Activated CD4-positive, alpha-beta memory T cell treated with anti-CD3 and anti-CD28 coated beads for 36 hours (primary cell): ENCODE measurements at regions of chr7 and their contacts with region 1.

Region 1: DNA sequence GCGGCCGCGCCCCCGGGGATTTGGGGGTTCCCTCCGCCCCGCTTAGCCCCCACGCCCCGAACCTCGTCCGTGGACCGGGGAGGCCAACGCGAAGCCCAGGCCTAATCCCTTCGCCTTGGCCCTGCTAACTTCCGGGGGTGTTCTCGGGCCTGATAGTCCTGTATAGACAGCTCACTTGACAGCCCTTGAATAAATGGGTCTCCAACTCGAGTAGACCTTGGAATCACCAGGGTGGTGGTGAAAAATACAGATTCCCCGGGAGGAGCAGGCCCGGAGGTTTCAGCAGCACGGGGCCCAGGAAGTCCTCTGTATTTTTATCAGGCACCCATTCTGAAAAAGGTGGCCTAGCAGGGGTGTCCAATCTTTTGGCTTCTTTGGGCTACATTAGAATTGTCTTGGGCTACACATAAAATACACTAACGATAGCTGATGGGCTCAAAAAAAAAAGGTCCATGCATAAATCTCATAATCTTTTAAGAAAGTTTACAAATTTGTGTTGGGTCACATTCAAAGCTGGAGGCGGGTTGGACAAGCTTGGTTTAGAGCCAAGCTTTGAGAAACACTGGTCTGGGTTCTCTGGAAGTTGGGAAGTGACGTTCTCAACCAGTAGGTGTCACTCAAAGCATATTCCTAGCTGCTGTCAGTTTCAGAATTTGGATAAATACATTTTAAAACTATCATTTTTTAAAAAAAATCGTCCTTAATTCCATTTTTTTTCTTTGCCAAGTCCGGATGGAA is 221.7 kb downstream of the PHTF2 start:
- DNase-seq: peak; percentile 42
- H3K4me3 Mint-ChIP-seq: peak overlapping the region; percentile 67
- H3K27ac Mint-ChIP-seq: peak overlapping the region; percentile 40
- H3K4me1 Mint-ChIP-seq: peaks cover 13% of the 10 kb centered on the region
- H3K27me3 Mint-ChIP-seq: peaks cover 13% of the 10 kb centered on the region

Region 2: DNA sequence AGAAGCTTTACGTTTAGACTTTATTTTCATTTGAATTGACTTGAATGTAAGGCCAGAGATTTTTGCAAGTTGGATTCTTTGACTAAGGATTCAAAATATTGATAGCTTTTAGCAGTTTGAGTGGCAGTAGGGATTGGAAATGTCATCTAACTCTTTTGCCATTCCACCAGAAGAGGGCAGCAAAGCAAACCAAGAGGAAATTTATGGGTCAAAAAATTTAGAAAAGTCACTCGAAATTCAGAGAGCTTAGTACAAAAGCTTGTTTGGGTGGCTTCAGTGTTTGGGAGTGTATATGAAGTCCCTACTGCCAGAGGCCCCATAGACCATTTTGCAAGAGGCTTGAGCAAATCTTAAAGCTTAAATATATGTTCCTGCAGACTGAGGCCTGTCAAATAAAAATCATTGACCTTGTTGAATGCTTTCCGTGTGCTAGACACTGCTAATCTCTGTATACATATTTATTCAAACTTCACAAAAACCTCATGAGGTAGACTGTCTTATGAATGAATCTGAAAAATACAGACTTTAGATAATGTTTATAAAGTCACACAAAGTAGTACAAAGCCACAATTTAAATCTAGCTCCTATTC is 368.6 kb before region 1 on chr7:
- CTCF ChIA-PET with region 1: interaction called, 13 read pairs
- POLR2A ChIA-PET with region 1: no interaction called
- intact Hi-C with region 1: no loop called
- DNase-seq: no peak
- H3K4me3 Mint-ChIP-seq: no peak overlapping the region
- H3K27ac Mint-ChIP-seq: no peak overlapping the region
- H3K4me1 Mint-ChIP-seq: no peaks in the 10 kb centered on the region
- H3K27me3 Mint-ChIP-seq: no peaks in the 10 kb centered on the region

Region 3: GRCh38 chr7:78039790-78040776 is 19.8 kb after region 1 on chr7:
- CTCF ChIA-PET with region 1: interaction called, 66 read pairs
- POLR2A ChIA-PET with region 1: no interaction called
- intact Hi-C with region 1: loop called (anchors 1 kb)
- DNase-seq: peak; percentile 70
- H3K4me3 Mint-ChIP-seq: no peak overlapping the region
- H3K27ac Mint-ChIP-seq: no peak overlapping the region
- H3K4me1 Mint-ChIP-seq: peaks cover 4% of the 10 kb centered on the region
- H3K27me3 Mint-ChIP-seq: peaks cover 16% of the 10 kb centered on the region

Region 4: DNA sequence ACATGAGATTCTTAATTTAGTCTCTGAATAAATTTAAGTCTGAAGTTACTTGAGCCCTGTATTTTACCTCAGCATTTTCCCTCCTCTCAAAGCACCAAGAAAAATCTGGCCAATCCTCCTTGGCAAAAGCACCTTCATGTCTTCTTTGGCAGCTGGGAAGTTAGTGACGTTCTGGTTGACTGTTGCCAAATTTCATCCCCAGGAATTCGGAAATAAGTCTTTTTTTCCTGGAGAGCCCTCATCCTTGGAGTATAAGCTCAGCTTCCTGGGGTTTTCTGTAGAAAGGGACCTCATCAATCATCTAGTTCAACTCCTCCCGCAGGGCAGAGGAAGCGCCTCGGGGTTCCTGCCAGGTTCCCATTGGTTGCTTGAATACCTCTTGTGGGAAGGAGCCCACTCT is 155.9 kb after region 1 on chr7:
- CTCF ChIA-PET with region 1: no interaction called
- POLR2A ChIA-PET with region 1: no interaction called
- intact Hi-C with region 1: no loop called
- DNase-seq: no peak
- H3K4me3 Mint-ChIP-seq: no peak overlapping the region
- H3K27ac Mint-ChIP-seq: no peak overlapping the region
- H3K4me1 Mint-ChIP-seq: no peaks in the 10 kb centered on the region
- H3K27me3 Mint-ChIP-seq: no peaks in the 10 kb centered on the region

Region 5: DNA sequence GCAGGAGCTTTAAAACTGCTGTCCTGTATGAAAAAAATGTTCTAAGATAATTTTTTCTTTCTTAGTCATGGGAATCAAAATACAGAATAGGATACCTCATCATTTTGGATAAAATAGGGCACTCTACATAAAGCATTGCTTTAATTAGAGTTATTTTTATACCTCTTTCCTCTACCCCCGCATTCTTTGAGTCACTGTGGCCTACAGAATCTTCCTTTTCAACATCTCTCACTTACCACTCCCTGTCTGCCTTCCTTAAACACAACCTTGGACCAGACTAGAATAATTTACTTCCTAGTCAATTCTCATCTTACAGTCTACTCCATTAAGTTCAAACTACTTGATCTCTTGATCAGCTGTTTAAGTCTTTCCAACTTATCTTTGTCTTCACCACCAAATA is 240.5 kb after region 1 on chr7:
- CTCF ChIA-PET with region 1: no interaction called
- POLR2A ChIA-PET with region 1: no interaction called
- intact Hi-C with region 1: no loop called
- DNase-seq: no peak
- H3K4me3 Mint-ChIP-seq: no peak overlapping the region
- H3K27ac Mint-ChIP-seq: no peak overlapping the region
- H3K4me1 Mint-ChIP-seq: no peaks in the 10 kb centered on the region
- H3K27me3 Mint-ChIP-seq: no peaks in the 10 kb centered on the region

Region 6: GRCh38 chr7:79176859-79177477 is 1156.7 kb after region 1 on chr7:
- CTCF ChIA-PET with region 1: no interaction called
- POLR2A ChIA-PET with region 1: no interaction called
- intact Hi-C with region 1: loop called (anchors 2 kb)
- DNase-seq: no peak
- H3K4me3 Mint-ChIP-seq: no peak overlapping the region
- H3K27ac Mint-ChIP-seq: no peak overlapping the region
- H3K4me1 Mint-ChIP-seq: no peaks in the 10 kb centered on the region
- H3K27me3 Mint-ChIP-seq: no peaks in the 10 kb centered on the region